Calu3 (cell line): ENCODE measurements at regions of chr7 and their contacts with region 1.

Region 1: DNA sequence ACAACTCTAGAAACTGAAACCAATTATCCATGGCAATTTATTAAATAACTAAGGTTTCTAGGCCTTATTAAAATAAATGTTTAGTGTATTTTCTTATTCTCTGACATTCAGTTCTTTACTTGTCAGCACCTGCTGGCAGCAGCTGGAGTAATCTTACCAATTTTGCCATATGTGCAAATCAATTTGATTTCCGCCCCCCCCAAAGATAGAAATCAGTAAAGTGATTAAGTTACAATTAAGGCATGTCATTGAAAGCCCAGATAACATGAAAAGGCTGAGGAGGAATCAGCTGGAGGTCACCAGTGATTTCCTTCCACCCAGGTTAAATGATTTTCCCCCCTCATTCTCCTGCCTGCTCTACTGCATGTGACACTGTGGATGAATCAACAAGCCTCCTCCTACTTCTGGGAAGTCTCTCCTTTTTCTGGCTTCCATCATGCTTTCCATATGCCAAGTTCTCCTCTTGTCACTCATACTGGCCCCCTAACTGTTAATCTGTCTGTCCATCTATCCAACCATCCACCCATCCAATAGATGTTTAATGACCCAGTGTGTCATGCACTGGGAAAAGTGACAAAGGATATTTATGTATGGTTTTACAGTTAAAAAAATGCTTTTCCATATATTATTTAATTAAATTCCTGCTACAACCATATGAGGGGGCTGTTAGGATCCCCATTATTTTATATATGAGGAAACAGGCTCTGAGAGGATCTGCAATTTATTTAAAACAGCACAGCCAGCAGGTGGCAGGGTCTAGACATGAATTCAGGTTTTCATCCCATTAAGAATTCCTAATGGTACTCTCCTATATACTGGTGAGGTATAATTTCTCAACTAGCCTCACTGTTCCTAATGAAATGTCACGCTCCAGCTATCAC is 116.5 kb downstream of the ATXN7L1 start:
- DNase-seq: peak; percentile 56
- H3K4me3 Mint-ChIP-seq: no peak overlapping the region
- H3K27ac Mint-ChIP-seq: no peak overlapping the region
- H3K4me1 Mint-ChIP-seq: no peaks in the 10 kb centered on the region
- H3K27me3 Mint-ChIP-seq: no peaks in the 10 kb centered on the region
- CTCF ChIP-seq: peak; percentile 57

Region 2: GRCh38 chr7:105816266-105816828 is 56.4 kb after region 1 on chr7:
- CTCF ChIA-PET with region 1: no interaction called
- intact Hi-C with region 1: no loop called
- DNase-seq: no peak
- H3K4me3 Mint-ChIP-seq: no peak overlapping the region
- H3K27ac Mint-ChIP-seq: no peak overlapping the region
- H3K4me1 Mint-ChIP-seq: no peaks in the 10 kb centered on the region
- H3K27me3 Mint-ChIP-seq: no peaks in the 10 kb centered on the region
- CTCF ChIP-seq: no peak

Region 3: DNA sequence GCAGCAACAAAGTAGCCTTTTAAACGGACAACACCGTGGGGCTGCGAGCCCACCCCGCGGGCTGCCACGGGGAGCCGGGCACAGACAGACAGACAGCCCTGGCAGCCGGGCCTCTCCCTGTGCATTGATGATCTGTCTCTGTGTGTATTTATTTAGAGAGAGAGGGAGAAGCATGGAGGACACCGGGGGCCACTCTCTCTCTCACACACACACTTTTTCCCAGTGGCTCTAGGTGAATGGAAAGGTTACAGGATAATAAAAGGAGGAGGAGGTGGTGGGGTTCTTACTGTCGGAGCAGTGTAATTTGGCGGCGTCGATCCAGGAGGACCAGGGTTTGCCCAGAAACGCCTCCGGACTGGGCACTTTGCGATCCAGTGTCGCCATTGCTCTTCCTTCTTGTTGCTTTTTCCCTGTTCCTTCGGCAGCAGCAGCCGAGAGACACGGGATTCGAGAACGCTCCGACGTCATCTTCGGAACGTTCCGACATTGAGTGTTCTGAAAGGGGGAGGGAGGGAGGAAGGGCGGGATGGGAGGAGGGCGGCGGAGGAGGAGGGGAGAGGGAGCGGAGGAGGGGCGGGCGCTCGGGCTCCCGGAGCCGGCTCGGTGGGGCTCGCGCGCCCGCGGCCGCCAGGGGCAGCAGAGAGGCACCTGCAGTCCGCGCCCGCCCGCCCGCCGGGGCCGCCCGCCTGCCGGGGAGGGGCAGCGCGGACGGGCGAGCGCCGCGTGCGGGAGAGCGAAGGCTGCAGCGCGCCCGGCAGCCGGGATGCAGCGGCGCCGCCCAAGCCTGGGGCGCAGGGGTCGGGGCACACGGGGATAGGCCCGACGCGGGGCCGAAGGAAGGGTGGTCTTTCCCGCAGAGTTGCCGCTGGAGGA is 116.4 kb after region 1 on chr7 and contains the start of gene ATXN7L1:
- CTCF ChIA-PET with region 1: no interaction called
- intact Hi-C with region 1: loop called (anchors 1 kb)
- DNase-seq: peak; percentile 96
- H3K4me3 Mint-ChIP-seq: peak within 1 kb of the TSS; percentile 99
- H3K27ac Mint-ChIP-seq: peak within 1 kb of the TSS; percentile 99
- H3K4me1 Mint-ChIP-seq: peaks cover 16% of the 10 kb centered on the region
- H3K27me3 Mint-ChIP-seq: no peaks in the 10 kb centered on the region
- CTCF ChIP-seq: peak; percentile 64
- total RNA-seq, gene ATXN7L1: 11.7 and 12.0 TPM in 2 replicates

Region 4: GRCh38 chr7:105963038-105963667 is 203.2 kb after region 1 on chr7 and contains the start of gene CDHR3:
- CTCF ChIA-PET with region 1: no interaction called
- intact Hi-C with region 1: no loop called
- DNase-seq: no peak
- H3K4me3 Mint-ChIP-seq: no peak within 1 kb of the TSS
- H3K27ac Mint-ChIP-seq: no peak within 1 kb of the TSS
- H3K4me1 Mint-ChIP-seq: no peaks in the 10 kb centered on the region
- H3K27me3 Mint-ChIP-seq: peaks cover 42% of the 10 kb centered on the region
- CTCF ChIP-seq: no peak
- total RNA-seq, gene CDHR3: 4.0 and 4.1 TPM in 2 replicates

Region 5: GRCh38 chr7:106009403-106010226 is 249.7 kb after region 1 on chr7:
- CTCF ChIA-PET with region 1: interaction called, 3 read pairs
- intact Hi-C with region 1: loop called (anchors 1 kb)
- DNase-seq: peak; percentile 86
- H3K4me3 Mint-ChIP-seq: peak overlapping the region; percentile 36
- H3K27ac Mint-ChIP-seq: no peak overlapping the region
- H3K4me1 Mint-ChIP-seq: no peaks in the 10 kb centered on the region
- H3K27me3 Mint-ChIP-seq: peaks cover 67% of the 10 kb centered on the region
- CTCF ChIP-seq: peak; percentile 95

Region 6: GRCh38 chr7:106041140-106041717 is 281.3 kb after region 1 on chr7:
- CTCF ChIA-PET with region 1: interaction called, 5 read pairs
- intact Hi-C with region 1: loop called (anchors 1 kb)
- DNase-seq: peak; percentile 61
- H3K4me3 Mint-ChIP-seq: no peak overlapping the region
- H3K27ac Mint-ChIP-seq: no peak overlapping the region
- H3K4me1 Mint-ChIP-seq: peaks cover 9% of the 10 kb centered on the region
- H3K27me3 Mint-ChIP-seq: peaks cover 36% of the 10 kb centered on the region
- CTCF ChIP-seq: peak; percentile 76